Prostate gland (tissue), 2 donors: ENCODE measurements at regions of chr1 and their contacts with region 1.

Region 1: GRCh38 chr1:99808391-99809115 is 41.6 kb upstream of the AGL start:
- DNase-seq: peak; percentile 58
- H3K4me3 ChIP-seq: no peak overlapping the region
- H3K27ac ChIP-seq: peak overlapping the region; percentile 39 to 46
- H3K4me1 ChIP-seq: no peaks in the 10 kb centered on the region
- H3K27me3 ChIP-seq: no peaks in the 10 kb centered on the region
- CTCF ChIP-seq: peak in 3 of 4 experiments; percentile 59 to 76 (median 73)
- POLR2A ChIP-seq: no peak

Region 2: GRCh38 chr1:99751877-99752504 is 56.6 kb before region 1 on chr1:
- intact Hi-C with region 1: no loop called
- DNase-seq: no peak
- H3K4me3 ChIP-seq: no peak overlapping the region
- H3K27ac ChIP-seq: no peak overlapping the region
- H3K4me1 ChIP-seq: no peaks in the 10 kb centered on the region
- H3K27me3 ChIP-seq: no peaks in the 10 kb centered on the region
- CTCF ChIP-seq: no peak
- POLR2A ChIP-seq: no peak

Region 3: GRCh38 chr1:99776120-99776519 is 32.4 kb before region 1 on chr1:
- intact Hi-C with region 1: no loop called
- DNase-seq: no peak
- H3K4me3 ChIP-seq: no peak overlapping the region
- H3K27ac ChIP-seq: no peak overlapping the region
- H3K4me1 ChIP-seq: no peaks in the 10 kb centered on the region
- H3K27me3 ChIP-seq: no peaks in the 10 kb centered on the region
- CTCF ChIP-seq: no peak
- POLR2A ChIP-seq: no peak

Region 4: GRCh38 chr1:100037927-100038659 is 229.5 kb after region 1 on chr1:
- intact Hi-C with region 1: loop called (anchors 10 kb)
- DNase-seq: peak; percentile 91
- H3K4me3 ChIP-seq: peak overlapping the region; percentile 94 to 96
- H3K27ac ChIP-seq: peak overlapping the region; percentile 97 to 99
- H3K4me1 ChIP-seq: no peaks in the 10 kb centered on the region
- H3K27me3 ChIP-seq: no peaks in the 10 kb centered on the region
- CTCF ChIP-seq: peak in 1 of 4 experiments; percentile 8
- POLR2A ChIP-seq: peak; percentile 98

Region 5: DNA sequence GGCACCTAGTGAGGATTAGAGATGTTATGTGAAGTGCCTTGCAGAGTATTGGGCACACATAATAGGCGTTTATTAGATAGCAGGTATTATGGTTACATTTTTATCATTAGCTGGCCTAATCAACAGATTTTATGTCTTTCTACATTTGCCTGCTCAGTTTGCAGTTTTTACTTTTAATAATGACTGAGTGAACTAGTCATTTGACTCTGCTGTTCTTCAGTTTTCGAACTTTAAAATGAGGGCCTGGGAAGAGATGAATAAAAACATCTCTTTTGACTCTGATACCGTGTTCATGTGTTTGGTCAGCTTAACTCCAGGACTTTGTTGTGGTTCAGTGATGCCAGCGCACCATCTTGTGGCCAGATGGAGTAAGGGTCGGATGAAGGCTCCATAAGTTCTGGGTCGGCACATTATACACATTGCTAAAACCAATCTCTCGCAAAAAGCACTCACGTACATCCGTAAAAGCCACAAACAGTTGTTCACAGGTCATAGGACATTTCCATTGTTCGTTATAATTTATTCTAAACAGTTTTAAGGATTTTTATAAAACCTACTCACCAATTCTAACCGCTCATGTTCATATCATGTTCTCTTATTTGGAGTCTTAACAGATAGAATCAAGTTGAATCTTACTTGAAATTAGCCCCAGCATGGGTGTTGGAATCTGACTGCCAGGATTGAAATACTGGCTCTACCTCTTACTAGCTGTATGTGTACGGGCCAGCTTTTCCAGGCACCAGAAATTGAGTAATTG is 651.0 kb after region 1 on chr1:
- intact Hi-C with region 1: loop called (anchors 5 kb)
- DNase-seq: peak; percentile 76
- H3K4me3 ChIP-seq: no peak overlapping the region
- H3K27ac ChIP-seq: peak overlapping the region in 1 of 2 donors; percentile 39
- H3K4me1 ChIP-seq: peaks cover 3% of the 10 kb centered on the region
- H3K27me3 ChIP-seq: no peaks in the 10 kb centered on the region
- CTCF ChIP-seq: peak; percentile 58 to 89 (median 82)
- POLR2A ChIP-seq: no peak

Region 6: DNA sequence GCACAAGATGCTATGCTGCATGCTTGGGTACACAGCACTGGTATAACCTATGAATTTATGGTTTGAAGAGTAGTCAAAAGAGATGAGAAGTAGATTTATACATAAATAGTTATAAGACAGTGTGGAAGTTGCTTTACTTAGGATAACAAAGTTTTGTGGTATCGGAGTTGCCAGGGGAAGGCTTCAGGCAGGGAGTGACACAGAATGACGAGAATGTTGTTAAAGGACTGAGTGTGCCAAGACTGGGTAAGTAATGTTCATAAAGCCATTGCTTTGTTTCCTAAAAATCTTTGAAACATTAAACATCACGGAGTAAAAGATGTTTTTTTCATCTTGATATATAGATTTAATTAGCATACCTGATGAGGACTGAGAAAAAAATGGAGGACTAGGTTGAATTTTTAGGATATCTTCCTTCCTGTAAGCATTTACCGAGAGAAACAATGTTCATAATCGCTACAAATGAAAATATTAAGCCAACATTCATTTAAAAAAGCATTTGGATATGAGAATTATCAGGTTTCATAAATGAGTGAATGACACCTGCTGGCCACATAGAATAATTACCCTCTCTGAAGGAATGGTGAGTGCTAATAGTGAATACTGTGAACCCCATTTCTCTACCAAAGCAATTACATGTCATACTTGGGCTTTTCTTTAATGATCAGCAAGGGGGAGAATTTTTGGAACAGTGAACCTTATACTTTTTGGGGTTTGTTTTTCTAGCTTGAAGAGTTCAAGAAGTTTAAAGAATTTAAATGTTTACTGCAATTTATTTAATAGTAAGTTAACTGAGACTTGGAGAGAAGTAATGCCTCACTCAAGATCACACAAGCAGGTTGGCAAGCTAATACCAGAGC is 1057.7 kb after region 1 on chr1:
- intact Hi-C with region 1: loop called (anchors 5 kb)
- DNase-seq: no peak
- H3K4me3 ChIP-seq: no peak overlapping the region
- H3K27ac ChIP-seq: no peak overlapping the region
- H3K4me1 ChIP-seq: no peaks in the 10 kb centered on the region
- H3K27me3 ChIP-seq: no peaks in the 10 kb centered on the region
- CTCF ChIP-seq: peak in 3 of 4 experiments; percentile 54 to 67 (median 57)
- POLR2A ChIP-seq: no peak